ENCODE measurements at regions of chr9 and their contacts with region 1.

Region 1: GRCh38 chr9:131733541-131734061 is 6.3 kb downstream of the RAPGEF1 start:
- DNase-seq: peak; percentile 97
- H3K4me3 ChIP-seq: no peak overlapping the region
- H3K27ac ChIP-seq: peak overlapping the region; percentile 87
- H3K4me1 ChIP-seq: peaks cover 81% of the 10 kb centered on the region
- H3K27me3 ChIP-seq: no peaks in the 10 kb centered on the region
- CTCF ChIP-seq: no peak
- POLR2A ChIP-seq: no peak

Region 2: DNA sequence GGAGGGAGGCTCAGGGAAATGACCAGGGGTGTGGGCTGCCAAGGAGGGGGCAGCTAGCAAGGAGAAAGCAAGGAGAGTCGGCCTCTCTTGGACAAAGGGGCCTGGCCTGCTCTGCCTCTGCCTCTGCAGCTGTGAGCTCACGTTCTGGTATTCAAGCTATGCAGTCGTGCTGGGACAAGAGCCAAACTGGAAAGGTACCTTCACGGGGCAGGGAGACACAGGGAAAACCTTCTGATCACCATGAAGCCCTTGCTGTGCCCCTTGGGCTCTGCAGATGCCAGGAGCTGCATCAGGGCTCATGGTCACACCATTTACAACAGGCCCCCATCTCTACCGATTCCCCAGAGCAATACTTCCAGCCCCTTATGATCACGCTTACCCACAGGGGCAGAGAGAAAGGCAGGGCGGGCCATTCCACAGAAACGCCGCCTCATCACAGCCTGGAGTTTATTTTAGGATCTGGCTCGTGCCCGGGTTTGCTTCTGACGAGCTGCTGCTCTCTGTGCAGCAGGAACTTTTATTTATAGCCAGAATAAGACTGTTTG is 125.0 kb before region 1 on chr9:
- CTCF ChIA-PET with region 1: interaction called, 5 read pairs
- POLR2A ChIA-PET with region 1: no interaction called
- dilution Hi-C with region 1: no loop called
- intact Hi-C with region 1: loop called (anchors 2 kb)
- DNase-seq: peak; percentile 85
- H3K4me3 ChIP-seq: no peak overlapping the region
- H3K27ac ChIP-seq: peak overlapping the region; percentile 45
- H3K4me1 ChIP-seq: peaks cover 17% of the 10 kb centered on the region
- H3K27me3 ChIP-seq: no peaks in the 10 kb centered on the region
- CTCF ChIP-seq: no peak
- POLR2A ChIP-seq: no peak

Region 3: GRCh38 chr9:131697097-131697496 is 36.5 kb before region 1 on chr9:
- CTCF ChIA-PET with region 1: interaction called, 12 read pairs
- POLR2A ChIA-PET with region 1: no interaction called
- dilution Hi-C with region 1: no loop called
- intact Hi-C with region 1: no loop called
- DNase-seq: no peak
- H3K4me3 ChIP-seq: no peak overlapping the region
- H3K27ac ChIP-seq: no peak overlapping the region
- H3K4me1 ChIP-seq: peaks cover 14% of the 10 kb centered on the region
- H3K27me3 ChIP-seq: no peaks in the 10 kb centered on the region
- CTCF ChIP-seq: peak in 1 of 2 donors; percentile 3
- POLR2A ChIP-seq: no peak

Measured in endothelial cell of umbilical vein (primary cell).